Breast epithelium (tissue), 4 donors: ENCODE measurements at regions of chr10 and their contacts with region 1.

Region 1: GRCh38 chr10:101481256-101481655 is 106.8 kb downstream of the POLL start:
- DNase-seq: no peak
- H3K4me3 ChIP-seq: no peak overlapping the region
- H3K27ac ChIP-seq: no peak overlapping the region
- H3K4me1 ChIP-seq: no peaks in the 10 kb centered on the region
- H3K27me3 ChIP-seq: no peaks in the 10 kb centered on the region
- CTCF ChIP-seq: no peak
- POLR2A ChIP-seq: no peak

Region 2: DNA sequence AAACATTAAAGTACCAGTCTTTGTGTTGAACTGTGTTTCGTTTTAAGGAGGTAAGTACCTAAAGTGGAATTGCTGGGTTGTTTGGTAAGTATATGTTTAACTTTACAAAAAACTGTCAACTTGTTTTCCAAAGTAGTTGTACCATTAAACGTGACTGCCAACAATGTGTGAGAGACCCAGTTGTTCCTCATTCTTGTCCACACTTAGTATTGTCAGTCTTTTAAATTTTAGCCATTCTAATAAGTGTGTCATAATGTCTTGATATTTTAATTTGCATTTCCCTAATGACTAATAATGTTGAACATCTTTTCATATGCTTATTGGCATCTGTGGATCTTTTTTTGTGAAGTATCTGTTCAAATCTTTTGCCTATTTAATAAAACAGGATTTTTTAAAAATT is 32.5 kb after region 1 on chr10:
- intact Hi-C with region 1: loop called (anchors 2 kb)
- DNase-seq: no peak
- H3K4me3 ChIP-seq: no peak overlapping the region
- H3K27ac ChIP-seq: no peak overlapping the region
- H3K4me1 ChIP-seq: no peaks in the 10 kb centered on the region
- H3K27me3 ChIP-seq: no peaks in the 10 kb centered on the region
- CTCF ChIP-seq: no peak
- POLR2A ChIP-seq: no peak

Region 3: DNA sequence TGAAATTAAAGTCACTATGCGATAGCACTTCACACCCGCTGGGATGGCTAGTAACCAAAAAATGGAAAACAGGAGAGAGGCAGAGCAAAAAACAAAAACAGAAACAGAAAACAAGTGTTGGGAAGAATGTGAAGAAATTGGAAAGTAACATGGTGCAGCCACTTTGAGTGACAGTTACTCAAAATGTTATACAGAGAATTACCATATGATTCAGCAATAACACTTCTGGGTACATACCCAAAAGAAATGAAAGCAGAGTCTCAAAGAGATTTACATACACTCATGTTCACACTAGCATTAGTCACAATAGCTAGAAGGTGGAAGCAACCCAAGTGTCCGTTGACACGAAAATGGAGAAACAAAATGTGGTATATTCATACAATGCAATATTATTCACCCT is 450.9 kb after region 1 on chr10:
- intact Hi-C with region 1: no loop called
- DNase-seq: no peak
- H3K4me3 ChIP-seq: no peak overlapping the region
- H3K27ac ChIP-seq: no peak overlapping the region
- H3K4me1 ChIP-seq: no peaks in the 10 kb centered on the region
- H3K27me3 ChIP-seq: no peaks in the 10 kb centered on the region
- CTCF ChIP-seq: no peak
- POLR2A ChIP-seq: no peak